ENCODE measurements at regions of chr6 and their contacts with region 1.

Region 1: GRCh38 chr6:31143148-31143547 is 4.3 kb upstream of the PSORS1C2 start:
- DNase-seq: peak; percentile 83 to 89 (median 86)
- ATAC-seq: peak; percentile 78 to 93
- H3K4me3 ChIP-seq: no peak overlapping the region
- H3K27ac ChIP-seq: peak overlapping the region; percentile 65
- H3K4me1 ChIP-seq: peaks cover 8% of the 10 kb centered on the region
- H3K27me3 ChIP-seq: no peaks in the 10 kb centered on the region

Region 2: GRCh38 chr6:31190488-31190887 is 47.3 kb after region 1 on chr6:
- intact Hi-C with region 1: loop called in 3 of 4 experiments (anchors 2 to 5 kb)
- DNase-seq: no peak
- ATAC-seq: no peak
- H3K4me3 ChIP-seq: no peak overlapping the region
- H3K27ac ChIP-seq: no peak overlapping the region
- H3K4me1 ChIP-seq: no peaks in the 10 kb centered on the region
- H3K27me3 ChIP-seq: no peaks in the 10 kb centered on the region

Region 3: DNA sequence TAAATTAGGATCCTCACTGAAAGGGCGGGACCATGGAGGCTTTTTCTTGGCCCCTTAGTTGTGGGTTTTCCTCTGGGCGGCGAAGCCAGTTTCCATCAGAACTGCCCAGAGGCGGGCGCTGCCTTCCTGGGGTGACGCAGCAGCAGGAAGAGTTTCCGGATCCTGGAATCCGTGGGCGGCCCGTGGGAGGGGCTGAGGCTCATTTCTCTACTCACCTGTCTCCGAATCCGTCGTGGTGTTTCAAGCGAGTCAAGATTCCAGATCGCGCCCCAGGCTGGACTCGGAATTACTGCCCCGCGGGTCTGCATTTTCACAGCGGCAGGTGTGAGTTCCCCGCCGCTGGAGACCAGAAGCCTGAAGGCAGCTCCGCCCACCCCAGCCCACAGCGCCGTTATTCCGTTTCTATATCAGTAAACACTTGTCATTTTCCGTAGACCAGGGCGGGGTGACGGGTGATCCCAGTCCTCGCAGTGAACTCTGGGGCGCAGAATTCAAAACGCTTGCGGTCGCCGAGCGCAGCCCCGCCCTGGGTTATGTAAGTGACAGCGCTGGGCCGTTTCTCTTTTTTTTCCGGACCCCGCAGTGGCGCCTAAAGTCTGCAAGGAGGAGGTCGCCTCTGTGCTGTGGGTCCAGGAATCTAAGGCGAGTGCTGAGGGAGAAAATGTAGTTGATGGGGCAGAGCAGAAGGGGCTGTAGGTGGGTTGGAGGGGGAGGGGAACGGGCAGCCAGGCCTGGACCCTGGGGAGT is 54.6 kb after region 1 on chr6:
- intact Hi-C with region 1: loop called in 2 of 4 experiments (anchors 2 to 5 kb)
- DNase-seq: peak; percentile 93 to 97 (median 96)
- ATAC-seq: peak; percentile 93 to 94
- H3K4me3 ChIP-seq: peak overlapping the region; percentile 67
- H3K27ac ChIP-seq: peak overlapping the region; percentile 96
- H3K4me1 ChIP-seq: no peaks in the 10 kb centered on the region
- H3K27me3 ChIP-seq: no peaks in the 10 kb centered on the region

Region 4: GRCh38 chr6:31366693-31367470 is 223.7 kb after region 1 on chr6:
- intact Hi-C with region 1: loop called (anchors 5 to 10 kb)
- DNase-seq: peak; percentile 86 to 96 (median 96)
- ATAC-seq: peak; percentile 98 to 99
- H3K4me3 ChIP-seq: no peak overlapping the region
- H3K27ac ChIP-seq: no peak overlapping the region
- H3K4me1 ChIP-seq: no peaks in the 10 kb centered on the region
- H3K27me3 ChIP-seq: no peaks in the 10 kb centered on the region

Region 5: DNA sequence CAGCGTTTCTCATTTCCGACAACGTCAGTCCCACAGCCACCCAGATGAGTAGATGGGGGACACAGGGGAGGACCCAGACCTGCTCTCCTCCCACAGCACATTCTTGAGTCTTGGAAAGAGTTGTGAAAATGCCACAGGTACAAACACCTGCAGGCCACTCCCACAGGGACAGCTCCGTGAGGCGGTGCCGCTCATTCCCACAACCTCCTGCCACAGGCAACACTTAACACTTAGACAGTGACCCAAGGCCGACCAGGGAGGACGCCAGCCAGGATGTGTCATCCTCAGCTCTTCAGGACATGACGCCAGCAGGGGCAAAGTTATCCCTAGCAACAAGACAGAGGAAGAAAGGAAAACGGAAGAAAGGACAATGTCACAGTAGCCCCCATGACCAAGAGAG is 236.7 kb after region 1 on chr6:
- intact Hi-C with region 1: loop called in 1 of 4 experiments (anchors 10 kb)
- DNase-seq: no peak
- ATAC-seq: no peak
- H3K4me3 ChIP-seq: no peak overlapping the region
- H3K27ac ChIP-seq: no peak overlapping the region
- H3K4me1 ChIP-seq: no peaks in the 10 kb centered on the region
- H3K27me3 ChIP-seq: no peaks in the 10 kb centered on the region

Measured in right cardiac atrium (tissue), 5 donors.